AG04450 (cell line): ENCODE measurements at regions of chr11 and their contacts with region 1.

Region 1: GRCh38 chr11:16945671-16946469 is 68.3 kb downstream of the PLEKHA7 start:
- DNase-seq: no peak
- H3K4me3 ChIP-seq: no peak overlapping the region
- H3K27ac ChIP-seq: no peak overlapping the region
- H3K27me3 ChIP-seq: peaks cover 13% of the 10 kb centered on the region
- CTCF ChIP-seq: peak; percentile 56

Region 2: DNA sequence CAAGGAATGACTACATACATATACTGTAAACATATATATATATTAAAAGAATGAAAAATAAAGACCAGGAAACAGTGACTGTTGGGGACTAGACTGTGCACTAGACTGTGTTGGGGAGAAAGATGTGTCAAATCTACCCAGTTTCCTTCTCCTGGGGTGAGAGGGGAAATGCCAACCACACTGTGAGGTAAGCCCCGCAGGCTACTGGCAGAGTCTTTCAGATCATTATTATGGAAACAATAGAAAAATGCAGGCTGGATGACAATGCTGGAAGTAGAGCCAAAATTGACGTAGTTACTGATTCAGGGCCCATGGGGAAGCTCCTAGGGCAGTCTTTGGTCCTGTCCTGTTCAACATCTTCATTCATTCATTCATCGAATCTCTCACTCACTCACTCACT is 106.0 kb before region 1 on chr11:
- CTCF ChIA-PET with region 1: no interaction called
- POLR2A ChIA-PET with region 1: no interaction called
- DNase-seq: no peak
- H3K4me3 ChIP-seq: no peak overlapping the region
- H3K27ac ChIP-seq: no peak overlapping the region
- H3K27me3 ChIP-seq: peaks cover 3% of the 10 kb centered on the region
- CTCF ChIP-seq: no peak

Region 3: DNA sequence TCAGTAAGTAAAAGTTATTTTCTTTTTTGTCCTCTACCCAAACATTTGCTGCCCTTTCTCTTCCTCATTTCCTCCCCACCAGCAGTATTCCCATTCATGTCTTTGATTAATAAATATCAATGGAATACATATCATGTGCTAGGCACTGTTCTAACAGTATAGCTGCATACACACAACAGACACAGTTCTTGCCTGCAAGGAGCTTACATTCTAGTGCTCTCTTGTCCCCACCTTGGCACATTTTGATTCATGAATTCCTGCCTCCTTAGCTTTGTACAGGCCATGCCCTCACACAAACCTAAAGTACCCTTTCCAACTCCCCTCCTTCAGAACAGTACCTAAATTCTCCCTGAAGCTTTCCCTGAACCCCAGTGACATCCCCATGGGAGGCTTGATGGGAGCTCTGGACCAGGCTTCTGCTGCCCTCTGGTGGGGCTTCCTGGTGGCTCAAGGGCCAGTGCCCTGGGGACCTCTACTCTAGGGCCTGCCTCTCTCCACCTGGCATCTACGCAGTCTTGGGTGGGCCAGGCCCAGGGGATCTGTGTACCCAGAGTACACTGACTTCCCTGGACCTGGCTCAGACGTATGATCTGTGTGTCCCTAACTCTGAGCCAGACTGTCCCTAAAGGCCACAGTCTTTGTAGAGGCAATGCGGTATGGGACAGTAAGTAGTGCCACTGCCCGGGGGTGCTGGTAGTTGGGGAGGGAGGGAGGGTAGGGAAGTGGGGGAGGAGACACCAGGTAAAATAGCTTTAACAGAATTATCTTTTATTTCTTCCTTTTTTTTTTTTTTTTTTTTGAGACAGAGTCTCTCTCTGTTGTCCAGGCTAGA is 117.5 kb after region 1 on chr11:
- CTCF ChIA-PET with region 1: interaction called, 60 read pairs
- POLR2A ChIA-PET with region 1: no interaction called
- DNase-seq: no peak
- H3K4me3 ChIP-seq: no peak overlapping the region
- H3K27ac ChIP-seq: no peak overlapping the region
- H3K27me3 ChIP-seq: no peaks in the 10 kb centered on the region
- CTCF ChIP-seq: peak; percentile 77